ENCODE measurements at regions of chr11 and their contacts with region 1.

Region 1: DNA sequence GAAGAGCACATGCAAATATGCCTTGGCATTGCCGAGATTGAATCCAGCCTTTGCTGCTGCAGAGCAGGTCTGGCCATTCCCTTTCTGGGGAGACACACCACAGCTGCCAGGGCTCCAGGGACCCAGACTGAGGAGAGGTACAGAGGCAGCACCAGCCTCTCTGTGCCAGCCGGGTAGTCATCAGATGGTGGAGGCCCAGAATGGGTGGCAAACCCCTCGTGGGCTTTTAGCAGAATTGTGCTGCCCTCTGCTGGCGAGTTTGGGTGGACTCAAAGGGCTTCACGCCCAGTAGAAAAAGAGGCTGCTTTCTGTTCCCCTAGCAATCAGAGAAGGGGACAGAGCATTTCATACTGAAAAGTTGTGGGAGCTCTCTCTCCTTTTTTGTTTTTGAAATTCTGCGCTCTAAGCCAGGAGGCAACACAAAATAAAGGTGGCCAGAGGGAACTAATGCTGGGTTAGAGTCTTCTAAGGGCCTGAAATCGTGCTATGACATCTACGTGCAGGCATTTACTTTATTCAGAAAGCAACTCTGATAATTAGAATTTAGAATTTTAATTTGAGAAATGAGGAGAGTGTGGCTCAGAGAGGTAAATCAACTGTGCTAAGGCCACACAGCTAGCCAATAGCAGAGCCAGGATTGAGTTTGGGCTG is 158.8 kb upstream of the NAV2 start:
- DNase-seq: peak; percentile 72
- H3K4me3 ChIP-seq: no peak overlapping the region
- H3K27ac ChIP-seq: no peak overlapping the region
- H3K4me1 ChIP-seq: no peaks in the 10 kb centered on the region
- H3K27me3 ChIP-seq: no peaks in the 10 kb centered on the region
- CTCF ChIP-seq: peak; percentile 72

Region 2: GRCh38 chr11:17683378-17684161 is 1870.2 kb before region 1 on chr11:
- CTCF ChIA-PET with region 1: no interaction called
- POLR2A ChIA-PET with region 1: no interaction called
- intact Hi-C with region 1: no loop called
- DNase-seq: no peak
- H3K4me3 ChIP-seq: no peak overlapping the region
- H3K27ac ChIP-seq: no peak overlapping the region
- H3K4me1 ChIP-seq: no peaks in the 10 kb centered on the region
- H3K27me3 ChIP-seq: peaks cover 71% of the 10 kb centered on the region
- CTCF ChIP-seq: no peak

Region 3: GRCh38 chr11:19071255-19071654 is 482.6 kb before region 1 on chr11:
- CTCF ChIA-PET with region 1: interaction called, 8 read pairs
- POLR2A ChIA-PET with region 1: no interaction called
- intact Hi-C with region 1: loop called (anchors 1 kb)
- DNase-seq: peak; percentile 87
- H3K4me3 ChIP-seq: no peak overlapping the region
- H3K27ac ChIP-seq: no peak overlapping the region
- H3K4me1 ChIP-seq: no peaks in the 10 kb centered on the region
- H3K27me3 ChIP-seq: no peaks in the 10 kb centered on the region
- CTCF ChIP-seq: peak; percentile 90

Region 4: DNA sequence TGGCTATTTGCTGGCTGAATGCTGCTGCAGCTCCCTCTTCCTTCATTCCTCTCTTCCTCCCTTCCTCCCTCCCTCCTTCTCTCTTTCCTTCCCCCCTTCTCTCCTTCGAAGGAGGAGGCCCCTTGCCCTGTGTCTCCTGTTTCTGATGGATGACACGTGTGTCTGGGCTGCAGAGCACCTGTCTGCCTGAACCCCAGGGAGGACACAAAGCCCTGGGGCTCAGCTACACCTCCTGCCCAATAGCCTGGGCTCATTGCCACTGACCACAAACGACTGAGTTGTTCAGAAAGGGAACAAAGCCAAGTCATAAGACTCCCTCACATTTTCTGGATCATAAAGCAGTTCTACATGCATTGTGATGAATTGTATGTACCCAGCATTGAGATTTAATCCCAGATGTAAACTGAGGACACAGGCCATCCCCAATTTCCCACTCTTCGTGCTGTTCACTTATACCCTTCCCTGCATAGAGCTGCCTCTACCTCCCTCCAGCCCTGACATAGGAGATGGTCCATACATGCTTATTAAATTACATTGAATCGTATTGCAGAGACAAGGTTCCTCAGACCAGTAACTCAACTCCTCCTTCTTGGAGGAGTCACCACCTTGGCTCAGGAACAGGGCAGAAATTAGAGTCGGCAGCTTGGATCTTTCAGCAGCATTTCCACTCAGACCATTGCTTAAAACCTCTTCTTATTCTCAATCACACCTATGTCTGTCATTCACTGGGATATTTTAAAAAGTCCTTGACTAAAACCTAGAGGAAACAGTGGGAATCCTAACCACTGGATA is 353.2 kb before region 1 on chr11:
- CTCF ChIA-PET with region 1: interaction called, 10 read pairs
- POLR2A ChIA-PET with region 1: no interaction called
- intact Hi-C with region 1: no loop called
- DNase-seq: no peak
- H3K4me3 ChIP-seq: no peak overlapping the region
- H3K27ac ChIP-seq: no peak overlapping the region
- H3K4me1 ChIP-seq: no peaks in the 10 kb centered on the region
- H3K27me3 ChIP-seq: peaks cover 10% of the 10 kb centered on the region
- CTCF ChIP-seq: no peak

Region 5: GRCh38 chr11:19259487-19260345 is 294.1 kb before region 1 on chr11:
- CTCF ChIA-PET with region 1: no interaction called
- POLR2A ChIA-PET with region 1: no interaction called
- intact Hi-C with region 1: loop called (anchors 1 kb)
- DNase-seq: peak; percentile 60
- H3K4me3 ChIP-seq: no peak overlapping the region
- H3K27ac ChIP-seq: no peak overlapping the region
- H3K4me1 ChIP-seq: no peaks in the 10 kb centered on the region
- H3K27me3 ChIP-seq: no peaks in the 10 kb centered on the region
- CTCF ChIP-seq: peak; percentile 82

Region 6: GRCh38 chr11:19311308-19312030 is 242.3 kb before region 1 on chr11:
- CTCF ChIA-PET with region 1: no interaction called
- POLR2A ChIA-PET with region 1: no interaction called
- intact Hi-C with region 1: loop called (anchors 1 kb)
- DNase-seq: peak; percentile 52
- H3K4me3 ChIP-seq: no peak overlapping the region
- H3K27ac ChIP-seq: no peak overlapping the region
- H3K4me1 ChIP-seq: no peaks in the 10 kb centered on the region
- H3K27me3 ChIP-seq: peaks cover 8% of the 10 kb centered on the region
- CTCF ChIP-seq: peak; percentile 81

Region 7: DNA sequence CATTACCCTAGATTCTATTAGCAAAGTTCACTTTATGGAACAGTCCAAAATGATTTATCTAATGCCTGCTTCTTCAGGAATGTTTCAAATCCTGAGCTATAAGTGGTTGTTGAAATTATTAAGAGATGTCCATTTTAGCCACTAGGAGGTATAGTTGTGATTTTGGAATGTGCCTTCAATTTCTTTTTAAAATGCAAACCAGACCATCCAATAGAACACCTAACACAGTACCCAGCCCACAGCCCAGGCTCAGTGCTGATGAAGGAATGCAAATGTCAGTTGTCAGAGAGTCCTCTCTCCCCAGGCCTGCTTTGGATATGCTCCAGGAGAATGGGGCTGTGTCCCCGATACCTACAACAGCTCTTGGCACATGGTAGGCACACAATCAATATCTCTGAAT is 227.3 kb before region 1 on chr11:
- CTCF ChIA-PET with region 1: no interaction called
- POLR2A ChIA-PET with region 1: no interaction called
- intact Hi-C with region 1: loop called (anchors 5 kb)
- DNase-seq: no peak
- H3K4me3 ChIP-seq: no peak overlapping the region
- H3K27ac ChIP-seq: no peak overlapping the region
- H3K4me1 ChIP-seq: no peaks in the 10 kb centered on the region
- H3K27me3 ChIP-seq: peaks cover 7% of the 10 kb centered on the region
- CTCF ChIP-seq: no peak

Region 8: GRCh38 chr11:19580646-19581045 is 26.8 kb after region 1 on chr11:
- CTCF ChIA-PET with region 1: no interaction called
- POLR2A ChIA-PET with region 1: no interaction called
- intact Hi-C with region 1: no loop called
- DNase-seq: no peak
- H3K4me3 ChIP-seq: no peak overlapping the region
- H3K27ac ChIP-seq: no peak overlapping the region
- H3K4me1 ChIP-seq: no peaks in the 10 kb centered on the region
- H3K27me3 ChIP-seq: no peaks in the 10 kb centered on the region
- CTCF ChIP-seq: no peak

Region 9: DNA sequence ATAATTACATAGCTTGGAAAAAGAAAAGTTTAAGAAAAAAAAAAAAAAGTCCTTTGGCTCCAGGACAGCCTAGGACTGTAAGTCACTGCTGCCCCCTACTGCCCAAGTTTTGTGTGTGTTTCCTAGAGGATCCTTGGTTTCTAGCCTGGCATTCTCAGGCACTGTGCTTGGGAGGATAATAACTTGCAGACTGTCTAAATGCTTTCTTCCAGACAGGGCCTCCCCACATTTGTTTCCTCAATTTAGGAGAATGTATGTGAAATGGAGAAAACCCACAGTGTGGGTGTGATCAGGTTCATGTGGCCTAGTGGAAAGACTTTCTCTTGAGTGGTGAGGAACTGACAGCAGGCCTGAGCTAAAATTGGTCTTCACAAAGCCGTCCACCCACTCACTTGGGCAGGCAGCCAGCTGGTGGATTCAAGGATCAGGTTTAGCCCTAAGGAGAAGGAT is 349.8 kb after region 1 on chr11:
- CTCF ChIA-PET with region 1: interaction called, 3 read pairs
- POLR2A ChIA-PET with region 1: no interaction called
- intact Hi-C with region 1: loop called (anchors 2 kb)
- DNase-seq: peak; percentile 67
- H3K4me3 ChIP-seq: no peak overlapping the region
- H3K27ac ChIP-seq: no peak overlapping the region
- H3K4me1 ChIP-seq: no peaks in the 10 kb centered on the region
- H3K27me3 ChIP-seq: no peaks in the 10 kb centered on the region
- CTCF ChIP-seq: peak; percentile 75